Tibial artery (tissue), 4 donors: ENCODE measurements at regions of chr10 and their contacts with region 1.

Region 1: GRCh38 chr10:102225646-102226541 is at the start of gene ELOVL3:
- DNase-seq: peak; percentile 92 to 93
- H3K4me3 ChIP-seq: peak within 1 kb of the TSS; percentile 24 to 36
- H3K27ac ChIP-seq: peak within 1 kb of the TSS; percentile 52 to 54
- H3K4me1 ChIP-seq: peaks cover 0 to 26% (median 26%) of the 10 kb centered on the region in 4 donors
- H3K27me3 ChIP-seq: peaks cover 0 to 32% of the 10 kb centered on the region in 2 donors
- CTCF ChIP-seq: peak in 1 of 2 experiments; percentile 9

Region 2: DNA sequence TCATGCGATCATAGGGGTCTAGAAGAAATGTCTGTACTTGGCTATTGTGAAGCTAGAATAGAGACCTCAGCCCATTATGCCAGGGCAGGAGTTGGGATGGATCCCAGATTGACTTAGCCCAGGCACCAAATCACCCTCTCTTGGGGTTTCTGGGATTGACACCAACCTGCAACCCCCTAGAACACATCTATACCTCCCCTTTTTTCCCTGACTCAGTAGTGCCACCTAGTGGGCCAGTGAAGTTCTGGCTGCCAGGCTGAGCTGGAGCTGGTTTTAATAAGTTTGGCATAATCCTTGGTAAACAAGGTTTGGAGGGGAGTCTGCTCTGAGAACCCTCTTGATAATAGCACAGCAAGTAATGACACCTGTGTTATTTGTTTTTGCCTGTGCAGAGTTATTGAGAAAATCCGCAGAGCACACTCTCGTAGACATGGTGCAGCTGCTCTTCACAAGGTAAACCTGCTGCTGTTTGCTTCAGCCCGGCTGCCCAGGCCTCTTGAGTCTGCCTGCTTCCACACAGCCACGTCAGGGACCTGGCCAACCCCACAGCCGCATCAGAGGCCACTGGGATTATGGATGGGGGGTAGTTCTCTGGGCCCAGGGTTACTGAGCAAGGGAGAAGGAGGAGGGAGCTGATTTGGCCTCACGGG is 126.3 kb after region 1 on chr10:
- intact Hi-C with region 1: loop called (anchors 2 kb)
- DNase-seq: peak in 1 of 2 donors; percentile 29
- H3K4me3 ChIP-seq: no peak overlapping the region
- H3K27ac ChIP-seq: no peak overlapping the region
- H3K4me1 ChIP-seq: no peaks in the 10 kb centered on the region
- H3K27me3 ChIP-seq: no peaks in the 10 kb centered on the region
- CTCF ChIP-seq: peak; percentile 75 to 88